Right ventricle myocardium inferior (tissue), 1 donor: ENCODE measurements at regions of chr7 and their contacts with region 1.

Region 1: GRCh38 chr7:64625114-64626082 is 40.5 kb upstream of the ZNF107 start:
- DNase-seq: no peak
- ATAC-seq: no peak

Region 2: GRCh38 chr7:64313740-64314491 is 311.5 kb before region 1 on chr7 and contains the start of gene ZNF736:
- intact Hi-C with region 1: loop called (anchors 10 kb)
- DNase-seq: peak; percentile 91
- ATAC-seq: peak; percentile 99
- total RNA-seq, gene ZNF736: 3.4 TPM

Region 3: GRCh38 chr7:64574540-64575126 is 50.8 kb before region 1 on chr7:
- intact Hi-C with region 1: no loop called
- DNase-seq: no peak
- ATAC-seq: peak; percentile 93